Ascending aorta (tissue), 2 donors: ENCODE measurements at regions of chr12 and their contacts with region 1.

Region 1: DNA sequence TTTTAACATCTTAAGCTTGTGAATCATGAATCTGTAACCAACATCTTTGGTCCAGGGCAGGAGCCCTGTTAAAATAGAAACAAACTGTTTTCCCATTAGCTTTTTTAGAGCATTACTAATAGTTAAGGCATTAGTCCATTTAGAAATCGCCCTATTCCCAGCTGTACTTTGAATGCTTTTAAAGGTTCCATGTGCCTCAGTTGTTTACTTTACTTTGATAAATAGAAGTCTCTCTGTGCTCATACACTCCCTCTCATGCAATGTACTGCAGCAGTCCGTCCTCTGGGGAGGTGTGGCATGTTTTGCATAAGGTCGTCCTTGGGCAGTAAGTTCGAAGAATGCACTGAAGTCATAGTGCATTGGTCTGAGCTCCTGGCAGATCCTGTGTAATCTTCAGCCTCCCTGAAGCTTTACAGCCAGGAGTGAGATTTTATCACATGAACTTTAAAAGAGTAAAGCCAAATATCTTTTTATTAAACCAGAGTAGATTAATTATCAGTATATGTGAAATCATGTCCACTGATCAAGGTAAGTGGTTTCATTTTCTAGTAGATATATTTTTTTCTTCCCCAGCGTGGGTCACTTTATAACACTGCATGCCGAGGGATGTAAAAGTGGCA is 134.7 kb downstream of the FGD4 start:
- DNase-seq: peak in 1 of 2 donors; percentile 90
- H3K4me3 ChIP-seq: peak overlapping the region; percentile 48 to 67
- H3K27ac ChIP-seq: peak overlapping the region; percentile 74 to 85
- H3K4me1 ChIP-seq: peaks cover 6 to 28% of the 10 kb centered on the region in 2 donors
- H3K27me3 ChIP-seq: no peaks in the 10 kb centered on the region
- CTCF ChIP-seq: no peak

Region 2: GRCh38 chr12:30580344-30580743 is 1953.7 kb before region 1 on chr12:
- intact Hi-C with region 1: no loop called
- DNase-seq: no peak
- H3K4me3 ChIP-seq: no peak overlapping the region
- H3K27ac ChIP-seq: no peak overlapping the region
- H3K4me1 ChIP-seq: no peaks in the 10 kb centered on the region
- H3K27me3 ChIP-seq: no peaks in the 10 kb centered on the region
- CTCF ChIP-seq: no peak

Region 3: GRCh38 chr12:32583534-32583933 is 49.5 kb after region 1 on chr12:
- intact Hi-C with region 1: loop called (anchors 5 kb)
- DNase-seq: no peak
- H3K4me3 ChIP-seq: no peak overlapping the region
- H3K27ac ChIP-seq: no peak overlapping the region
- H3K4me1 ChIP-seq: no peaks in the 10 kb centered on the region
- H3K27me3 ChIP-seq: no peaks in the 10 kb centered on the region
- CTCF ChIP-seq: no peak